Adrenal gland (tissue), 19 donors: ENCODE measurements at regions of chr5 and their contacts with region 1.

Region 1: GRCh38 chr5:159209438-159210305 is at the start of gene RNF145:
- DNase-seq: peak; percentile 83 to 95 (median 86)
- H3K4me3 ChIP-seq: peak within 1 kb of the TSS; percentile 19 to 93 (median 84)
- H3K27ac ChIP-seq: peak within 1 kb of the TSS; percentile 84 to 98 (median 92)
- H3K4me1 ChIP-seq: peaks cover 23 to 38% of the 10 kb centered on the region in 2 donors
- H3K27me3 ChIP-seq: no peaks in the 10 kb centered on the region
- CTCF ChIP-seq: no peak
- POLR2A ChIP-seq: peak in 1 of 2 donors; percentile 46
- total RNA-seq, gene RNF145: 61.6 to 138 (median 69.7) TPM

Region 2: GRCh38 chr5:159156426-159157238 is 53.0 kb before region 1 on chr5:
- intact Hi-C with region 1: loop called in 1 of 2 experiments (anchors 10 kb)
- DNase-seq: peak in 5 of 7 donors; percentile 50 to 55 (median 51)
- H3K4me3 ChIP-seq: no peak overlapping the region
- H3K27ac ChIP-seq: no peak overlapping the region
- H3K4me1 ChIP-seq: peaks cover 0 to 14% of the 10 kb centered on the region in 2 donors
- H3K27me3 ChIP-seq: no peaks in the 10 kb centered on the region
- CTCF ChIP-seq: peak; percentile 70 to 90 (median 80)
- POLR2A ChIP-seq: no peak

Region 3: DNA sequence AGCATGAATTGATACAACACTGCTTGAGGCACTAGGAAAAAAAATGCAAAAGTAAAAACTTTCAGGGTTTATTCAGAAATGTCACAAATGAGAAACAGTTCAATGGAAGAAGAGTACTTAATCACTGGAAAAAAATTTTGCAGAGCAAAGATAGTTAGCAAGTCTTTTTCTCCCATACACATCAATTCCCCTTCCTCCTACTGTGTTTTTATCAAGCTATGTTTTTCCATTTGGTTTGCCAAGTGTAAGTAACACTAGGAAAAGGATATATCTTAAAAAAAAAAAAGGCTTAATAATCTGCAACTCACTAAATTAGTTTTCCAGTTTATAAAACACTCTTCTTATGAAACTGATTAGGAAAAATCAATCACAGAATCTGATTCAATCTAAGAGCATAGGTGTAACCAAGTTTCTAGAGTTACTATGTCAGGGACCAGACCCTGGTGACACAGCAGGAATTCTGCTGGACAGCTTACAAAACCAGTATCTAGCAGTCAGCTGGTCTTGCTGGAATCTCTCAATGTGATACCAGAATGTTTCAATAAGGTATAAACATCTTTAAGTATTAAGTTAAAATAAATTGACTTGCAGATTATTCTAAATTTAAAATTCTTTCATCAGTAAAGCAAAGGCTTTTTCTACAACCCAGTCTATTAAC is 35.0 kb before region 1 on chr5:
- intact Hi-C with region 1: loop called in 1 of 2 experiments (anchors 5 kb)
- DNase-seq: no peak
- H3K4me3 ChIP-seq: no peak overlapping the region
- H3K27ac ChIP-seq: peak overlapping the region in 1 of 5 donors; percentile 64
- H3K4me1 ChIP-seq: peaks cover 9 to 53% of the 10 kb centered on the region in 2 donors
- H3K27me3 ChIP-seq: no peaks in the 10 kb centered on the region
- CTCF ChIP-seq: no peak
- POLR2A ChIP-seq: no peak

Region 4: GRCh38 chr5:159262859-159263567 is 53.3 kb after region 1 on chr5 and contains the start of gene UBLCP1:
- intact Hi-C with region 1: loop called in 1 of 2 experiments (anchors 5 kb)
- DNase-seq: peak; percentile 67 to 89 (median 77)
- H3K4me3 ChIP-seq: peak within 1 kb of the TSS; percentile 73 to 87 (median 84)
- H3K27ac ChIP-seq: peak within 1 kb of the TSS; percentile 57 to 92 (median 74)
- H3K4me1 ChIP-seq: peaks cover 0 to 24% of the 10 kb centered on the region in 2 donors
- H3K27me3 ChIP-seq: no peaks in the 10 kb centered on the region
- CTCF ChIP-seq: no peak
- POLR2A ChIP-seq: peak; percentile 8 to 44
- total RNA-seq, gene UBLCP1: 12.7 to 25.5 (median 20.7) TPM

Region 5: DNA sequence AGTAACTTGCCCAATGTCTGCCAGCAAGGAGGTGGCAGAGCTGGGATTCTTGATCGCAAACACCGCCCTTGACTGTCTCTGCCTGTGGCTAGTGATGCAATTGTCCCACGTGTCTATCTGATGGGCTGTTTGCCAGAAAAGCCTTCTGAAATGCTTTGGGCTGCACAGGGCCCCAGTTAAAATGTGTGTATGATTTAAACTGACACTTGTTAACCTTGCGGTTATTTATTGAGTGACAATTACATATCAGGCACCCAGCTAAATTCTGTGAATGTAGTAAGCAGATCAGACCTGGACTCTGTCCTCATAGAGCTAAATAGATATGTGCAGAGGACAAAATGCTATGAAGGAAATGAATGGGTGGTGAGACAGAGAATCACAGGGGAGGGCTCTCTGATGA is 132.2 kb after region 1 on chr5:
- intact Hi-C with region 1: no loop called
- DNase-seq: peak; percentile 87 to 95 (median 93)
- H3K4me3 ChIP-seq: no peak overlapping the region
- H3K27ac ChIP-seq: peak overlapping the region in 2 of 5 donors; percentile 12 to 48
- H3K4me1 ChIP-seq: peaks cover 0 to 16% of the 10 kb centered on the region in 2 donors
- H3K27me3 ChIP-seq: no peaks in the 10 kb centered on the region
- CTCF ChIP-seq: no peak
- POLR2A ChIP-seq: no peak